Activated T-helper 2 cell treated with anti-CD3 and anti-CD28 coated beads, Interferon-gamma antibody, Interleukin-2, Interleukin-4, amounts not matched to agents 10 μg/mL and 5 μg/mL and 100 μg/mL, durations not matched to agents 14 hours and 24 hours and 36 hours (primary cell): ENCODE measurements at regions of chr11 and their contacts with region 1.

Region 1: DNA sequence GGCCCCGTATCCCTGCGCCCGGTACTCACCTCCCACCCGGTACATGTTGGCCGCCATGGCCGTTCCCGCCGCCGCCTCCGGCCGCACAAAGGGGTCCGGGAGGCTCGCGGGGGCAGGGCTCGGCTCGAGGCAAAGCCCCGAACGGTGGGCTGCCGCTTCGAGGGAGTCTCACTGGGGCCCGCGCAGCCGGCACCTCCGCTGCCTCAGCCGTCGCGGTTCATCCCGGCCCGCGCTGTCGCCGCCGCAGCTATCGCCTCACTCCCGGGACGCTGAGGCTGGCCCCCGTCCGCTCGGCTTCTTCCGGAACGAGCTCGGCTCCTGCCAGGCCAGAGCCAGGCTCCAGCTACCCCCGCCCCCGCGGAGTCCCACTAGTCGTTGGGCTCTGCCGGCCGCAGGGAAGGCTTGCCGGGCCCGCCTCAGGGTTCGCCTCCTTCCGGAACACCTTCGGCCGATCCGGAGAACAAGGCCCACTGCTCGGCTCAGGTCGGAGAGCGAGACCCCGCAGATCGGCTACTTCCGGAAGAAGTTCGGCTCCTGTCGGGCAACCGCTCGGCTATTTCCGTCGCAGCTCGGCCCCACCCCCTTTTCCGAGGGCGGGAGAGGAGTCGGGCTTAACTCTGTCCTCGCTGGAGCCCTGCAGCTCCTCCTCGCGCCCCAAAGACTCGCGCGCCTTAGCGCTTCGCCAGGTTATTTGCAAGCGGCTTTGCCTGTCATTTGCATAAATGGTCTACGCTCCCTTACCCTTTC is at the start of gene MTA2:
- DNase-seq: peak; percentile 100
- H3K4me3 Mint-ChIP-seq: peak within 1 kb of the TSS; percentile 91
- H3K27ac Mint-ChIP-seq: peak within 1 kb of the TSS; percentile 95
- H3K4me1 Mint-ChIP-seq: peaks cover 41% of the 10 kb centered on the region
- H3K27me3 Mint-ChIP-seq: no peaks in the 10 kb centered on the region
- total RNA-seq, gene MTA2: 201 and 215 TPM in 2 replicates

Region 2: DNA sequence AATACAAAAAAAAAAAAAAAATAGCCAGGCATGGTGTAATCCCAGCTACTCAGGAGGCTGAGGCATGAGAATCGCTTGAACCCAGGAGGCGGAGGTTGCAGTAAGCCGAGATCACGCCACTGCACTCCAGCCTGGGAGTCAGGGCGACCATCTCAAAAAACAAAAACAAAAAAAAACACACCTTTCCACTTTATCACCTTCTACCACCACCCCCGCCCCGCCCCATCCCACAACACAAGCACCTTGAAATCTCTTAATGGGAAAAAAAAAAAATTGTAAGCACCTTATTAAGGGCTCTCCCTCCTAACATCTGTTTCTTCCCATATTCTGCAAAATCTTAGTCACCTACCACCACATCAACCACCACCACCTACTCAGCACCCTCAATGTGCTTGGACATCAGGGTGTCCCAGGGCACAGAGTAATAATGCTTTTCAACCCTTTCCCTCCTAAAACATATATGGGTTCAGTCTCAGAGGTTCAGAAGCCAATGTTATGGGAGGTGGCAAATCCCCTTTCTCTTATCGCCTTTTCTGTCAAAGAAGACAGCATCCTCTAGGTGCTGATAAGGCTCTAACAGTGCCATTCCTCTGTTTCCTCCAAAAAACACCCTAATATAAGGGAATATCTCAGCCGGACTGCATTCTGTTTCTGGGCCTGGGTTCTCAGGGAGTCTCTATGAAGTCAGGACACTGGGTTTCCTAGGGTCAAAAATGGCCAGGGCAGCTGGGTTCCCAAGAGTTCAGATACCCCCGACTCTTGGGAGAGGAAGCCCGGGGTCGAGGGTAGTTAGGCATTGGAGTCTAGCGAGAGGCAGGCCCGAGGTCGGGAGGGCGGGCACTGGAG is 50.8 kb after region 1 on chr11:
- intact Hi-C with region 1: loop called (anchors 2 kb)
- DNase-seq: no peak
- H3K4me3 Mint-ChIP-seq: peak overlapping the region; percentile 98
- H3K27ac Mint-ChIP-seq: peak overlapping the region; percentile 92
- H3K4me1 Mint-ChIP-seq: peaks cover 10% of the 10 kb centered on the region
- H3K27me3 Mint-ChIP-seq: no peaks in the 10 kb centered on the region